ENCODE measurements at regions of chr5 and their contacts with region 1.

Region 1: GRCh38 chr5:163505368-163506094 is at the start of gene MAT2B:
- DNase-seq: peak; percentile 92 to 98 (median 96)
- ATAC-seq: peak; percentile 85
- H3K4me3 ChIP-seq: peak within 1 kb of the TSS; percentile 60 to 88
- H3K4me3 Mint-ChIP-seq: peak within 1 kb of the TSS; percentile 91
- H3K27ac ChIP-seq: peak within 1 kb of the TSS; percentile 85 to 94
- H3K27ac Mint-ChIP-seq: peak within 1 kb of the TSS; percentile 99
- H3K4me1 ChIP-seq: peaks cover 39% of the 10 kb centered on the region
- H3K4me1 Mint-ChIP-seq: peaks cover 53% of the 10 kb centered on the region
- H3K27me3 ChIP-seq: no peaks in the 10 kb centered on the region
- H3K27me3 Mint-ChIP-seq: no peaks in the 10 kb centered on the region
- CTCF ChIP-seq: peak; percentile 48
- total RNA-seq, gene MAT2B: 25.1 to 31.4 TPM

Region 2: DNA sequence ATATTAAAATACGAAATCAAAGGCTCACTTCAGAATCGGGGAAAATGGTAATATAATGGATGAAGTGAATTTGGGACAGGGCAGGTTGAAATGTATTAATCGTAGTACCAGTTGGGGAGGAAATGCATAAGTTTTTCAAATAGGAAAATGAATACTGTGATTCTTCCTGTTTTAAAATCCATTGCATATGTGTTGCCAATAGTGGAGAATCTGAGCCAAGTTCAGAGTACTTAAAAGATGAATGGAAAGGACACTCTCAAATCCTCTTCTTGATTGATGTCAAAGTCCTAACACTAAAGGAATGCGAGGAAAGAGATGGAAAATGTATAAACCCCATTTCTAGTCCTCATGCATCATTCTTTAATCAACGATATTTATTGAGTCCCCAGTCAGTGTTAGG is 229.1 kb before region 1 on chr5:
- CTCF ChIA-PET with region 1: no interaction called
- POLR2A ChIA-PET with region 1: no interaction called
- intact Hi-C with region 1: no loop called
- DNase-seq: no peak
- ATAC-seq: no peak
- H3K4me3 ChIP-seq: no peak overlapping the region
- H3K4me3 Mint-ChIP-seq: no peak overlapping the region
- H3K27ac ChIP-seq: no peak overlapping the region
- H3K27ac Mint-ChIP-seq: no peak overlapping the region
- H3K4me1 ChIP-seq: no peaks in the 10 kb centered on the region
- H3K4me1 Mint-ChIP-seq: no peaks in the 10 kb centered on the region
- H3K27me3 ChIP-seq: no peaks in the 10 kb centered on the region
- H3K27me3 Mint-ChIP-seq: peaks cover 4% of the 10 kb centered on the region
- CTCF ChIP-seq: no peak

Region 3: GRCh38 chr5:163397354-163397753 is 108.2 kb before region 1 on chr5:
- CTCF ChIA-PET with region 1: no interaction called
- POLR2A ChIA-PET with region 1: no interaction called
- intact Hi-C with region 1: no loop called
- DNase-seq: no peak
- ATAC-seq: no peak
- H3K4me3 ChIP-seq: no peak overlapping the region
- H3K4me3 Mint-ChIP-seq: no peak overlapping the region
- H3K27ac ChIP-seq: no peak overlapping the region
- H3K27ac Mint-ChIP-seq: no peak overlapping the region
- H3K4me1 ChIP-seq: no peaks in the 10 kb centered on the region
- H3K4me1 Mint-ChIP-seq: no peaks in the 10 kb centered on the region
- H3K27me3 ChIP-seq: peaks cover 0 to 2% of the 10 kb centered on the region in 2 experiments
- H3K27me3 Mint-ChIP-seq: peaks cover 15% of the 10 kb centered on the region
- CTCF ChIP-seq: no peak

Region 4: GRCh38 chr5:163437309-163438182 is 68.0 kb before region 1 on chr5 and contains the start of gene CCNG1:
- CTCF ChIA-PET with region 1: no interaction called
- POLR2A ChIA-PET with region 1: interaction called, 15 read pairs
- intact Hi-C with region 1: loop called (anchors 1 kb)
- DNase-seq: peak; percentile 71 to 96 (median 88)
- ATAC-seq: peak; percentile 93
- H3K4me3 ChIP-seq: peak within 1 kb of the TSS; percentile 87 to 93
- H3K4me3 Mint-ChIP-seq: peak within 1 kb of the TSS; percentile 95
- H3K27ac ChIP-seq: peak within 1 kb of the TSS; percentile 79 to 80
- H3K27ac Mint-ChIP-seq: peak within 1 kb of the TSS; percentile 95
- H3K4me1 ChIP-seq: peaks cover 30% of the 10 kb centered on the region
- H3K4me1 Mint-ChIP-seq: peaks cover 53% of the 10 kb centered on the region
- H3K27me3 ChIP-seq: no peaks in the 10 kb centered on the region
- H3K27me3 Mint-ChIP-seq: no peaks in the 10 kb centered on the region
- CTCF ChIP-seq: no peak
- total RNA-seq, gene CCNG1: 114 to 126 TPM

Region 5: GRCh38 chr5:163459922-163460766 is 45.4 kb before region 1 on chr5 and contains the starts of genes HMMR and NUDCD2:
- CTCF ChIA-PET with region 1: interaction called, 7 read pairs
- POLR2A ChIA-PET with region 1: interaction called, 107 read pairs
- intact Hi-C with region 1: loop called (anchors 1 kb)
- DNase-seq: peak; percentile 86 to 98 (median 94)
- ATAC-seq: peak; percentile 82
- H3K4me3 ChIP-seq: peak within 1 kb of the TSS; percentile 77 to 79
- H3K4me3 Mint-ChIP-seq: peak within 1 kb of the TSS; percentile 97
- H3K27ac ChIP-seq: peak within 1 kb of the TSS; percentile 90 to 97
- H3K27ac Mint-ChIP-seq: peak within 1 kb of the TSS; percentile 99
- H3K4me1 ChIP-seq: peaks cover 38% of the 10 kb centered on the region
- H3K4me1 Mint-ChIP-seq: peaks cover 48% of the 10 kb centered on the region
- H3K27me3 ChIP-seq: no peaks in the 10 kb centered on the region
- H3K27me3 Mint-ChIP-seq: no peaks in the 10 kb centered on the region
- CTCF ChIP-seq: no peak
- total RNA-seq, gene HMMR: 0.67 to 0.76 TPM
- total RNA-seq, gene NUDCD2: 16.5 to 17.7 TPM

Region 6: GRCh38 chr5:163489055-163489744 is 16.3 kb before region 1 on chr5:
- CTCF ChIA-PET with region 1: interaction called, 8 read pairs
- POLR2A ChIA-PET with region 1: interaction called, 4 read pairs
- intact Hi-C with region 1: loop called in 1 of 2 experiments (anchors 1 kb)
- DNase-seq: peak in 4 of 9 experiments; percentile 12 to 52 (median 36)
- ATAC-seq: peak; percentile 51
- H3K4me3 ChIP-seq: no peak overlapping the region
- H3K4me3 Mint-ChIP-seq: no peak overlapping the region
- H3K27ac ChIP-seq: no peak overlapping the region
- H3K27ac Mint-ChIP-seq: no peak overlapping the region
- H3K4me1 ChIP-seq: no peaks in the 10 kb centered on the region
- H3K4me1 Mint-ChIP-seq: no peaks in the 10 kb centered on the region
- H3K27me3 ChIP-seq: no peaks in the 10 kb centered on the region
- H3K27me3 Mint-ChIP-seq: no peaks in the 10 kb centered on the region
- CTCF ChIP-seq: no peak

Region 7: GRCh38 chr5:163633926-163634460 is 128.5 kb after region 1 on chr5:
- CTCF ChIA-PET with region 1: no interaction called
- POLR2A ChIA-PET with region 1: no interaction called
- intact Hi-C with region 1: no loop called
- DNase-seq: no peak
- ATAC-seq: no peak
- H3K4me3 ChIP-seq: no peak overlapping the region
- H3K4me3 Mint-ChIP-seq: no peak overlapping the region
- H3K27ac ChIP-seq: no peak overlapping the region
- H3K27ac Mint-ChIP-seq: no peak overlapping the region
- H3K4me1 ChIP-seq: no peaks in the 10 kb centered on the region
- H3K4me1 Mint-ChIP-seq: no peaks in the 10 kb centered on the region
- H3K27me3 ChIP-seq: no peaks in the 10 kb centered on the region
- H3K27me3 Mint-ChIP-seq: peaks cover 9% of the 10 kb centered on the region
- CTCF ChIP-seq: no peak

Region 8: DNA sequence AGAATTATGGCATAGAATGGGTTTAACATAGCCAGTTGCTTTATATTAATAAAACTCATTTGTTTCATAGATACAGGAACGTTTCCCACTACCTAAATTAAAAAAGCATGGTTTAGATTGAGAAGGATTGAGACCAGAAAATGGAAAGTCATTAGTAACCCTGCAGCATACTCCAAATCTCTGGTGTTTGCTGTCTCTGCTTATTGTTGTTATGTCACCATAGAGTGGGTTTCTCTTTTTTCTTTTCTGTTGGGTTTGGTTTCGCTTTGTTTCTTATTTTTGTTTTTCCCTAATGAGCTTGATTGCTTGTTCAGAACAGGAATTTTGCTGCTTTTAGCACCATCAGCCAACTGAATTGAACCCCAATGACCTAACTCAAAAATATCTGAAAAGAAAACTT is 1034.6 kb after region 1 on chr5:
- CTCF ChIA-PET with region 1: no interaction called
- POLR2A ChIA-PET with region 1: no interaction called
- intact Hi-C with region 1: no loop called
- DNase-seq: no peak
- ATAC-seq: no peak
- H3K4me3 ChIP-seq: no peak overlapping the region
- H3K4me3 Mint-ChIP-seq: no peak overlapping the region
- H3K27ac ChIP-seq: no peak overlapping the region
- H3K27ac Mint-ChIP-seq: no peak overlapping the region
- H3K4me1 ChIP-seq: no peaks in the 10 kb centered on the region
- H3K4me1 Mint-ChIP-seq: no peaks in the 10 kb centered on the region
- H3K27me3 ChIP-seq: no peaks in the 10 kb centered on the region
- H3K27me3 Mint-ChIP-seq: no peaks in the 10 kb centered on the region
- CTCF ChIP-seq: no peak

Measured in CD8-positive, alpha-beta T cell (primary cell).